ENCODE measurements at regions of chr19 and their contacts with region 1.

Region 1: GRCh38 chr19:42199440-42200115 is 17.9 kb downstream of the DEDD2 start:
- DNase-seq: peak; percentile 37 to 73
- ATAC-seq: peak; percentile 22 to 40 (median 28)
- H3K4me3 ChIP-seq: peak overlapping the region; percentile 31
- H3K4me3 Mint-ChIP-seq: peak overlapping the region; percentile 88
- H3K27ac ChIP-seq: peak overlapping the region; percentile 90
- H3K27ac Mint-ChIP-seq: peak overlapping the region; percentile 91 to 95
- H3K4me1 ChIP-seq: peaks cover 93% of the 10 kb centered on the region
- H3K4me1 Mint-ChIP-seq: peaks cover 77 to 79% of the 10 kb centered on the region in 2 donors
- H3K27me3 ChIP-seq: no peaks in the 10 kb centered on the region
- H3K27me3 Mint-ChIP-seq: no peaks in the 10 kb centered on the region
- CTCF ChIP-seq: peak; percentile 13

Region 2: GRCh38 chr19:42132851-42133528 is 66.6 kb before region 1 on chr19:
- intact Hi-C with region 1: loop called (anchors 5 kb)
- DNase-seq: peak; percentile 83 to 92
- ATAC-seq: peak; percentile 74 to 86 (median 77)
- H3K4me3 ChIP-seq: peak overlapping the region; percentile 73
- H3K4me3 Mint-ChIP-seq: peak overlapping the region; percentile 80
- H3K27ac ChIP-seq: peak overlapping the region; percentile 49
- H3K27ac Mint-ChIP-seq: peak overlapping the region; percentile 58 to 86
- H3K4me1 ChIP-seq: peaks cover 73% of the 10 kb centered on the region
- H3K4me1 Mint-ChIP-seq: peaks cover 36 to 73% of the 10 kb centered on the region in 2 donors
- H3K27me3 ChIP-seq: no peaks in the 10 kb centered on the region
- H3K27me3 Mint-ChIP-seq: no peaks in the 10 kb centered on the region
- CTCF ChIP-seq: peak; percentile 100

Region 3: DNA sequence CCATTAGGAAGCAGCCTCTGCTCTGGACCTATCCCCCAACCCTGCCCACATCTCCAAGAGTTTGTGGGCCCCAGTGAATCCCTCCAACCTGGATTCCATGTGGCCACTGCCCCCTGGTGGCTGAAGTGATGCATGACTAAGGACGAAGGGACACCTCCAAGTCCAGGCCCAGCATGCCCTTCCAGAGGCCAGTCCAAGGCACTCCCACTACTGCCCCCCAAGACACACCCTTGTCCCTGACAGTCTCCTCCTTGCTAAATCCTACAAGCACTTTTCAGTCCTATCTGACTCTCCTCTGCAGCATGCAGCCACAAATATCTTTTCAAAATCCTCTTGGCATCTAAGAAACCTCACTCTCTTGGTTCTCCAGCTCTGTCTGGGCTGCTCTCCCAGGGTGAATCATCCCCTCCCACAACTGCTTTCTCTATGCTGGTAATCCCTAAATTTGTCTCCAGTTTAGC is 15.1 kb before region 1 on chr19:
- intact Hi-C with region 1: loop called (anchors 2 kb)
- DNase-seq: peak; percentile 64 to 84
- ATAC-seq: peak; percentile 77 to 79 (median 79)
- H3K4me3 ChIP-seq: no peak overlapping the region
- H3K4me3 Mint-ChIP-seq: peak overlapping the region; percentile 72
- H3K27ac ChIP-seq: peak overlapping the region; percentile 17
- H3K27ac Mint-ChIP-seq: peak overlapping the region; percentile 45 to 75
- H3K4me1 ChIP-seq: peaks cover 32% of the 10 kb centered on the region
- H3K4me1 Mint-ChIP-seq: peaks cover 46 to 48% of the 10 kb centered on the region in 2 donors
- H3K27me3 ChIP-seq: peaks cover 3% of the 10 kb centered on the region
- H3K27me3 Mint-ChIP-seq: peaks cover 0 to 3% of the 10 kb centered on the region in 2 donors
- CTCF ChIP-seq: peak; percentile 87

Region 4: DNA sequence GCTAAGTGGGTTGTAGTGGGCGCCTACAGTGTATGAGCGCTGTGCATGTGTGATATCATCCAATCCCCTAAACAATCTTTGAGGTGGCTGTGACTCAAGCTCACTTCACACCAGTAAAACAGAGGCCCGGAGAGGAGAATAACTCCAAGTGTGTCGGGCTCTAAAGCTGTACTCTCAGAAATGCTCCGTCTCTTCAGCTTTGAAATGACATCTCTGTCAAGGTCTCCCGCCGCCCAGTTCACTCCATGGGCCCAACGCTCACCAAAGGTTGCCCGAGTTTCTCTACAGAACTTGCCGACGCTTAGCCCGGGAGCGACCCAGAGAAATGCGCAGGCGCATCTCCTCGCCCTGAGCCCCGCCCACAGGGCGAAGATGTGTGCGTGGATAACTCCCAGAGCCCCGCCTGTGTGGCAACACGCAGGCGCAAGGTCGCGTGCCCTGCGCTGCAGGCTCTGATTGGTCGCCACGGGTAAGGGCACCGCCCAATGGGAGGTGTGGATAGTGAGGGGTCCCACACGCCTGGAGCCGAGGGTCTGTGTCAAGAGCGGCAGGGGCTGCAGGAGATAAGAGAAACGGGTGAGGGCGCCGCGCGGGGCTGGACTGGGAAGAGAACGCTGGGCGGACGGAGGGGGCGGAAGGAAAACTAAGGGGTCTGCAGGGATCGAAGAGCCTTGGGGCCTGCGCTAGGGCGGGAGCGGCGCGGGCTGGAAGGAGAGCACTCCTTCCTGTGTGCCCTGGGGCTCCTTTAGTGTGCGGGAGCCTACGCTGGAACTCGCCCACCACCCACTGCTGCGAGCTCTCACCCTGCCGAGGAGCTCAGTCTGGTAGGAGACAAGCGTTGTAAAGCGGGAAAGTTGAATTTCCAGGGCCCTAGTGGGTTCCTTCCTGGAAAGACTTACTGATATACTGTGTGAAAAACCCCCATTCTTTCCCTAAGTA is 20.5 kb after region 1 on chr19 and contains the start of gene ZNF526:
- intact Hi-C with region 1: loop called (anchors 1 kb)
- DNase-seq: peak; percentile 93 to 99
- ATAC-seq: peak; percentile 73 to 87 (median 78)
- H3K4me3 ChIP-seq: peak within 1 kb of the TSS; percentile 84
- H3K4me3 Mint-ChIP-seq: peak within 1 kb of the TSS; percentile 98
- H3K27ac ChIP-seq: peak within 1 kb of the TSS; percentile 76
- H3K27ac Mint-ChIP-seq: peak within 1 kb of the TSS; percentile 98 to 100
- H3K4me1 ChIP-seq: peaks cover 56% of the 10 kb centered on the region
- H3K4me1 Mint-ChIP-seq: peaks cover 51 to 58% of the 10 kb centered on the region in 2 donors
- H3K27me3 ChIP-seq: no peaks in the 10 kb centered on the region
- H3K27me3 Mint-ChIP-seq: no peaks in the 10 kb centered on the region
- CTCF ChIP-seq: no peak
- total RNA-seq, gene ZNF526: 8.8 to 10.6 (median 10.2) TPM

Region 5: GRCh38 chr19:42283143-42284065 is 83.8 kb after region 1 on chr19:
- intact Hi-C with region 1: loop called (anchors 5 kb)
- DNase-seq: peak; percentile 91 to 97
- ATAC-seq: peak; percentile 63 to 86 (median 72)
- H3K4me3 ChIP-seq: peak overlapping the region; percentile 52
- H3K4me3 Mint-ChIP-seq: no peak overlapping the region
- H3K27ac ChIP-seq: peak overlapping the region; percentile 99
- H3K27ac Mint-ChIP-seq: no peak overlapping the region
- H3K4me1 ChIP-seq: peaks cover 67% of the 10 kb centered on the region
- H3K4me1 Mint-ChIP-seq: peaks cover 28 to 35% of the 10 kb centered on the region in 2 donors
- H3K27me3 ChIP-seq: no peaks in the 10 kb centered on the region
- H3K27me3 Mint-ChIP-seq: no peaks in the 10 kb centered on the region
- CTCF ChIP-seq: no peak

Measured in natural killer cell (primary cell).